Heart right ventricle (tissue), 16 donors: ENCODE measurements at regions of chr9 and their contacts with region 1.

Region 1: GRCh38 chr9:3525836-3526164 is at the start of gene RFX3:
- DNase-seq: peak; percentile 92 to 93
- ATAC-seq: peak; percentile 94 to 99 (median 97)
- H3K4me3 ChIP-seq: peak within 1 kb of the TSS; percentile 64 to 90 (median 80)
- H3K27ac ChIP-seq: peak within 1 kb of the TSS; percentile 99 to 100 (median 100)
- H3K4me1 ChIP-seq: peaks cover 0 to 38% (median 28%) of the 10 kb centered on the region in 9 donors
- H3K27me3 ChIP-seq: no peaks in the 10 kb centered on the region
- CTCF ChIP-seq: no peak
- total RNA-seq, gene RFX3: 3.0 to 5.9 (median 3.9) TPM

Region 2: DNA sequence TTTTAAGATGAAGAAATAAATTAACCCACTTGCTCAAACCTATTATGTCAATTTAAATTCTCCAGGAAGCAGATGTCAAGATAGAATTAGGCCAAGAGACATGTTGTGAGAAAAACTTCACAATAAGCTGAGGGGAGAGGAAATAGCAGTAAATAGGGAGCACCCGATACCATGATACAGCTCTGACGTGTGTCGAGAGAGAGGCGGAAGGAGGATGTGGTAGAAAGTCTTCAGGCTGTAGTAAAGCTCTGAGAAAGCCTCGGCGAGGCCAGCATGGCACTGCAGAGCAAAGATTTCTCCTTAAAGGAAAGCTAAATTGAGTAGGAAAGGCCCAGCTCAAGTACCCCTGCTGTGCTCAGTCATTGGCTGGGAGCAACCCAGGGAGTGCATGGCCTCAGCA is 675.9 kb before region 1 on chr9:
- intact Hi-C with region 1: loop called in 2 of 10 experiments (anchors 10 kb)
- DNase-seq: no peak
- ATAC-seq: no peak
- H3K4me3 ChIP-seq: no peak overlapping the region
- H3K27ac ChIP-seq: no peak overlapping the region
- H3K4me1 ChIP-seq: peaks cover 1 to 12% (median 8%) of the 10 kb centered on the region in 9 donors
- H3K27me3 ChIP-seq: no peaks in the 10 kb centered on the region
- CTCF ChIP-seq: no peak

Region 3: DNA sequence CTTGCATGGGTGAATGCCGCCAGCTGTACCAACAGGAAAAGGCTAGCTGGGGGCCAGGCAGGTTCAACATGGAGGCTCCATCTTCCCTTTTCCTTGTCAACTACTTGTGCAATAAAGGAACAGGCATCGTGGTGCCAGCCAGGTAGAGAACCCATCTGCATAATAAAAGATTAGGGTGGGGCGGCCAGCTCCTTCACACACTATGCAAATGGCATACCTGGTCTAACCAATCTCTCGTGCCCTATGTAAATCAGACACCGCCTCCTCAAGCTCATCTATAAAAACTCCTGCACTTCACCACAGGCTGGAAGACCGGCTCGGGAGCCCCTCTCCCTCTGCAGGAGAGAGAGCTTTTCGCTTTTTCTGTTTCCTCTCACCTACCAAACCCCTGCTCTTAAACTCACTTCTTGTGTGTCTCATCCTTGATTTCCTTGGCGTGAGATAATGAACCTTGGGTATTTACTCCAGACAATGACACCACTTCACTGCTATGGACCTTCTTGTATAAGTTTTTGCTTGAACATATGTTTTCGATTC is 437.6 kb before region 1 on chr9:
- intact Hi-C with region 1: no loop called
- DNase-seq: no peak
- ATAC-seq: no peak
- H3K4me3 ChIP-seq: no peak overlapping the region
- H3K27ac ChIP-seq: no peak overlapping the region
- H3K4me1 ChIP-seq: no peaks in the 10 kb centered on the region
- H3K27me3 ChIP-seq: no peaks in the 10 kb centered on the region
- CTCF ChIP-seq: no peak

Region 4: GRCh38 chr9:3455717-3456116 is 70.1 kb before region 1 on chr9:
- intact Hi-C with region 1: no loop called
- DNase-seq: no peak
- ATAC-seq: no peak
- H3K4me3 ChIP-seq: no peak overlapping the region
- H3K27ac ChIP-seq: no peak overlapping the region
- H3K4me1 ChIP-seq: peaks cover 0 to 9% (median 0%) of the 10 kb centered on the region in 9 donors
- H3K27me3 ChIP-seq: no peaks in the 10 kb centered on the region
- CTCF ChIP-seq: no peak

Region 5: GRCh38 chr9:3467593-3468219 is 58.1 kb before region 1 on chr9:
- intact Hi-C with region 1: loop called in 3 of 10 experiments (anchors 5 to 10 kb)
- DNase-seq: peak; percentile 14 to 62
- ATAC-seq: peak; percentile 78 to 94 (median 89)
- H3K4me3 ChIP-seq: no peak overlapping the region
- H3K27ac ChIP-seq: no peak overlapping the region
- H3K4me1 ChIP-seq: peaks cover 0 to 35% (median 21%) of the 10 kb centered on the region in 9 donors
- H3K27me3 ChIP-seq: no peaks in the 10 kb centered on the region
- CTCF ChIP-seq: peak; percentile 57 to 92 (median 80)

Region 6: GRCh38 chr9:3473405-3473804 is 52.4 kb before region 1 on chr9:
- intact Hi-C with region 1: loop called in 4 of 10 experiments (anchors 2 to 10 kb)
- DNase-seq: no peak
- ATAC-seq: no peak
- H3K4me3 ChIP-seq: no peak overlapping the region
- H3K27ac ChIP-seq: no peak overlapping the region
- H3K4me1 ChIP-seq: peaks cover 0 to 40% (median 12%) of the 10 kb centered on the region in 9 donors
- H3K27me3 ChIP-seq: no peaks in the 10 kb centered on the region
- CTCF ChIP-seq: no peak

Region 7: DNA sequence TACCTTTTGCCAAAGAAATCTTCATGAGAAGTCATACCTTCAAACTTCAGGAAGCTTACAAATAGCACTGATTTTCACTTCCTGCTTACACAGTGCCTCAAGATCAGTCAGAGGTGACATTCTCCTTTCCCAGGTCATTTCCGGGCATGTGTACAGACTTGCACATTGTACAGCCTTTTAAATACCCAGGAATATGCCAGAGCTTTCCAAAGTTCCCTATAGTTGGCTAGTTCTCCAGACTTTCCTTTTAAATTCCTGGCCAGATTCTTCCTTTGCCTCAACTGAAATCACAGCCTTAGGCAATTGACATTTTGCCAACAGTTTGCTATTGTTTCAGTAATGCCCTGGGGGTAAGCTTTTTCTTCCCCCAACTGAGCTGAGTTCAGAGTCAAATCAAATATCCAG is 47.2 kb before region 1 on chr9:
- intact Hi-C with region 1: loop called in 3 of 10 experiments (anchors 2 to 10 kb)
- DNase-seq: no peak
- ATAC-seq: peak in 7 of 8 donors; percentile 23 to 84 (median 58)
- H3K4me3 ChIP-seq: no peak overlapping the region
- H3K27ac ChIP-seq: peak overlapping the region in 4 of 10 donors; percentile 17 to 38 (median 22)
- H3K4me1 ChIP-seq: peaks cover 0 to 24% (median 8%) of the 10 kb centered on the region in 9 donors
- H3K27me3 ChIP-seq: no peaks in the 10 kb centered on the region
- CTCF ChIP-seq: no peak